OCI-LY7 (cell line): ENCODE measurements at regions of chr6 and their contacts with region 1.

Region 1: GRCh38 chr6:111259089-111259831 is 172.0 kb downstream of the SLC16A10 start:
- DNase-seq: peak; percentile 100
- H3K4me3 ChIP-seq: peak overlapping the region; percentile 81
- H3K27ac ChIP-seq: peak overlapping the region; percentile 67
- H3K4me1 ChIP-seq: peaks cover 17% of the 10 kb centered on the region
- CTCF ChIP-seq: peak; percentile 92

Region 2: DNA sequence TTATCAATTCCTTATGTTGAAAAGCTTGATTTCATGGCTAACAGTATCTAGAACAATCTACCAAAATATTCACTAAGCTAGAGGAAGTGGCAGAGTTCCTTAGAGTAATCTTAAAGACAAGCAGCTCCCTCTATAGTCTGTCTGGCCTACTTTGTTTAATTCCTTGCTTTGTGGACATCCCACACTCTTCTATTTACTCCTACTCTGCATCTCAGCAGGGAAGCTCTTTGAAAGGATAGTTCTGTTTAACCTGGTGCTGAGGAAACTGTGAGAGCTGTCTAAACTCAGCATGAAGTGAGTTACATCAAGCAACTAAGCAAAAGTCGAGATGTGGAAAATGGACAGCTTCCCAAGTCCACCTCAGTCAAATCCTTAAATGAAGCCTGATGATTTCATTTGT is 219.5 kb after region 1 on chr6:
- CTCF ChIA-PET with region 1: interaction called, 28 read pairs
- POLR2A ChIA-PET with region 1: interaction called, 21 read pairs
- intact Hi-C with region 1: loop called (anchors 1 kb)
- DNase-seq: peak; percentile 74
- H3K4me3 ChIP-seq: peak overlapping the region; percentile 8
- H3K27ac ChIP-seq: peak overlapping the region; percentile 60
- H3K4me1 ChIP-seq: peaks cover 39% of the 10 kb centered on the region
- CTCF ChIP-seq: peak; percentile 78

Region 3: GRCh38 chr6:111565326-111566221 is 306.3 kb after region 1 on chr6:
- CTCF ChIA-PET with region 1: interaction called, 14 read pairs
- POLR2A ChIA-PET with region 1: interaction called, 4 read pairs
- intact Hi-C with region 1: loop called (anchors 1 kb)
- DNase-seq: peak; percentile 86
- H3K4me3 ChIP-seq: no peak overlapping the region
- H3K27ac ChIP-seq: peak overlapping the region; percentile 45
- H3K4me1 ChIP-seq: peaks cover 13% of the 10 kb centered on the region
- CTCF ChIP-seq: peak; percentile 73

Region 4: DNA sequence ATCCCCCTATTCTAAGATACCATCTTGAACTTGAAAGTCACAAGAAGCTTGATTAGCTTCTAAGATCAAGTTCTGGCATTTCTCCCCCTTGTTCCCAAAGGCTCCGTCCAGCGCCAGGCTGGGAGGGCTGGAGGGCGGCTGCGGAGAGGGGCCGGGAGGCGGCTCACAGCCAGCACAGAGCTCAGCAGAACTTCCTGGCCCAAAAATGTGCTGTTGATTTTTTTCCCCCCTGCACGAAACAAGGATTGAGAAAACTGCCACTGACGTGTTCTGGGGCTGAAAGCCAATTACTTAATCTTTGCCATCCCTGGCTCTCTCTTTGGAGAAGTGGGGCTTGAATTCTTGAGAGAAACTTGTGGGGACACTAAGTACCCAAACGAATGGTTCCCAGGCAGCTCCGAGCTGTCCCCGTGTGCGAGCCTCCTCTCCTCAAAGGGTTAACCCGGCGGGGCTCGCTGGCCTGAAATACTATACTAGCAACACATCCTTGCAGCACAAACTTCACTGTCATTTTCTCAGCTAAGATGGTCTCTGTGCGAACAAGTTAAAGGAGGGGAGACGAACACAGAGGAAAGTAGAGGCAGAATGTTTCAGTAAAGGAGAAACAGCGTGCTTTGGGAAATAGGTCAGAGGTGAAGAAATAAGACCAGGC is 346.0 kb after region 1 on chr6:
- CTCF ChIA-PET with region 1: interaction called, 10 read pairs
- POLR2A ChIA-PET with region 1: interaction called, 12 read pairs
- intact Hi-C with region 1: loop called (anchors 2 kb)
- DNase-seq: peak; percentile 68
- H3K4me3 ChIP-seq: peak overlapping the region; percentile 71
- H3K27ac ChIP-seq: peak overlapping the region; percentile 90
- H3K4me1 ChIP-seq: peaks cover 30% of the 10 kb centered on the region
- CTCF ChIP-seq: no peak

Region 5: GRCh38 chr6:111642463-111643158 is 383.4 kb after region 1 on chr6:
- CTCF ChIA-PET with region 1: interaction called, 4 read pairs
- POLR2A ChIA-PET with region 1: no interaction called
- intact Hi-C with region 1: loop called (anchors 1 kb)
- DNase-seq: peak; percentile 51
- H3K4me3 ChIP-seq: no peak overlapping the region
- H3K27ac ChIP-seq: no peak overlapping the region
- H3K4me1 ChIP-seq: no peaks in the 10 kb centered on the region
- CTCF ChIP-seq: peak; percentile 76

Region 6: GRCh38 chr6:112043032-112044007 is 784.1 kb after region 1 on chr6:
- CTCF ChIA-PET with region 1: no interaction called
- POLR2A ChIA-PET with region 1: interaction called, 6 read pairs
- intact Hi-C with region 1: loop called (anchors 1 kb)
- DNase-seq: peak; percentile 94
- H3K4me3 ChIP-seq: peak overlapping the region; percentile 70
- H3K27ac ChIP-seq: peak overlapping the region; percentile 75
- H3K4me1 ChIP-seq: peaks cover 6% of the 10 kb centered on the region
- CTCF ChIP-seq: peak; percentile 97